ENCODE measurements at regions of chr20 and their contacts with region 1.

Region 1: DNA sequence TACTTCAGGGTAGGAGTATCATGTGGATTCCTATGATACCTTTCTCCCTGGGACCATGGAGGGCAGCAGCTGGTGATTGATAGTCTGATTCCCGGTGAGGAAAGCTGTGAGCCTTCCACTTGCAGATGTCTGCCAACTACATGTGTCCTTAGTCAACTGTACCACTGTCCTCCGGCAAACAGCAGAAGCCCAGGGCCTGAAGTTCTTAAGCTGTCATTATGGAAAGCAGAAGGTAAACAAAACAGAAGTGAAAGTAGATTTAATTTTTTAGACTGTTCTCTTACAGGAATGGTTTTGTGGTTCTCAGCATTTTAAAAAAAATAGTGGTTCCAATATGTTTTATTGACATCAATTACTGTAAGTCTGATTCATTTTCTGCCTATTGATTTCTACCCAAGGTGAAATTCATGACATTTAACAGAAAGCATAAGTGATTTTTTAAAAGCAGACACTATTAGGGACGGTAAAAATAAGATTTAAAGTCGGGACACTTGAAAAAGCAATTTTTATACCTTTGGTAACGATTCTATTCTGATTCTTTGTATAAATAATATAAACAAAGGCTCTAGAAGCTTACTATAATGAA is 36.6 kb downstream of the PTPN1 start:
- H3K4me3 Mint-ChIP-seq: peak overlapping the region; percentile 58
- H3K27ac Mint-ChIP-seq: peak overlapping the region; percentile 81
- H3K4me1 Mint-ChIP-seq: peaks cover 55% of the 10 kb centered on the region
- H3K27me3 Mint-ChIP-seq: no peaks in the 10 kb centered on the region

Region 2: GRCh38 chr20:50509935-50510705 is 36.7 kb before region 1 on chr20 and contains the start of gene PTPN1:
- intact Hi-C with region 1: loop called (anchors 5 kb)
- H3K4me3 Mint-ChIP-seq: peak within 1 kb of the TSS; percentile 98
- H3K27ac Mint-ChIP-seq: peak within 1 kb of the TSS; percentile 97
- H3K4me1 Mint-ChIP-seq: peaks cover 62% of the 10 kb centered on the region
- H3K27me3 Mint-ChIP-seq: no peaks in the 10 kb centered on the region

Region 3: GRCh38 chr20:50731055-50731871 is 184.4 kb after region 1 on chr20 and contains the start of gene PARD6B:
- intact Hi-C with region 1: no loop called
- H3K4me3 Mint-ChIP-seq: peak within 1 kb of the TSS; percentile 95
- H3K27ac Mint-ChIP-seq: peak within 1 kb of the TSS; percentile 60
- H3K4me1 Mint-ChIP-seq: peaks cover 20% of the 10 kb centered on the region
- H3K27me3 Mint-ChIP-seq: peaks cover 29% of the 10 kb centered on the region